ENCODE measurements at regions of chr6 and their contacts with region 1.

Region 1: GRCh38 chr6:57177545-57178265 is 5.6 kb downstream of the BAG2 start:
- DNase-seq: no peak

Region 2: DNA sequence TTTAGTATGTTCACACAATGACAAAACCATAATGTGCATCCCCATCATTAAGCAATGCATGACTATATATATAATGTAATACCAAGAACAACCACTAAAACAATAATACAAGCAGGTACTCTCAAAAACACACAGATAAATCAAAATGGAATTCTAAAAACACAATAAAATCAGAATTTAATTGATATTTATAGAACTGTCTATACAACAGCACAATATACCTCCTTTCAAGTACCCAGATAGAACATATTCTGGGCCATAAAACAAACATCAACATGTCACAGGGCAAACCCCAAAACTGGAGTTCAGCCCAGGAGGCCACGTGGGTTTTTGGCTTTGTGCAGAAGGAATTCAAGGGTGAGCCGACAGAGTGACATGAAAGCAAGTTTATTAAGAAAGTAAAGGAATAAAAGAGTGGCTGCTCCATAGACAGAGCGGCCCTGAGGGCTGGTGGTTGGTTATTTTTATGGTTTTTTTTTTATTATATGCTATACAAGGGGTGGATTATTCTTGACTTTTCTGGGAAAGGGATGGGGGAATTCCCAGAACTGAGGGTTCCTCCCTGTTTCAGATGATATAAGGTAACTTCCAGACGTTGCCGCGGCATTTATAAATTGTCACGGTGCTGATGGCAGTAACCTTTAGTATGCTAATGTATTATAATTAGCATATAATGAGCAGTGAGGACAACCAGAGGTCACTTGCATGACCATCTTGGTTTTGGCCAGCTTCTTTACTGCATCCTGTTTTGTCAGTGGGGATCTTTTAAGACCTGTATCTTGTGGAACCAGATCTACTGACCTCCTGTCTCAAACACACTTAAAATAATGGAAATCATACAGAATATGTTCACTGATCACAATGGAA is 38.8 kb after region 1 on chr6:
- intact Hi-C with region 1: loop called (anchors 5 kb)
- DNase-seq: no peak

Region 3: GRCh38 chr6:57267586-57268293 is 90.0 kb after region 1 on chr6:
- intact Hi-C with region 1: loop called (anchors 2 kb)
- DNase-seq: no peak